ENCODE measurements at regions of chr7 and their contacts with region 1.

Region 1: GRCh38 chr7:122770686-122771335 is 68.1 kb upstream of the RNF148 start:
- DNase-seq: no peak
- ATAC-seq: peak in 1 of 8 donors; percentile 28
- H3K4me3 ChIP-seq: no peak overlapping the region
- H3K27ac ChIP-seq: no peak overlapping the region
- H3K4me1 ChIP-seq: peaks cover 0 to 7% (median 0%) of the 10 kb centered on the region in 9 donors
- H3K27me3 ChIP-seq: no peaks in the 10 kb centered on the region
- CTCF ChIP-seq: no peak

Region 2: DNA sequence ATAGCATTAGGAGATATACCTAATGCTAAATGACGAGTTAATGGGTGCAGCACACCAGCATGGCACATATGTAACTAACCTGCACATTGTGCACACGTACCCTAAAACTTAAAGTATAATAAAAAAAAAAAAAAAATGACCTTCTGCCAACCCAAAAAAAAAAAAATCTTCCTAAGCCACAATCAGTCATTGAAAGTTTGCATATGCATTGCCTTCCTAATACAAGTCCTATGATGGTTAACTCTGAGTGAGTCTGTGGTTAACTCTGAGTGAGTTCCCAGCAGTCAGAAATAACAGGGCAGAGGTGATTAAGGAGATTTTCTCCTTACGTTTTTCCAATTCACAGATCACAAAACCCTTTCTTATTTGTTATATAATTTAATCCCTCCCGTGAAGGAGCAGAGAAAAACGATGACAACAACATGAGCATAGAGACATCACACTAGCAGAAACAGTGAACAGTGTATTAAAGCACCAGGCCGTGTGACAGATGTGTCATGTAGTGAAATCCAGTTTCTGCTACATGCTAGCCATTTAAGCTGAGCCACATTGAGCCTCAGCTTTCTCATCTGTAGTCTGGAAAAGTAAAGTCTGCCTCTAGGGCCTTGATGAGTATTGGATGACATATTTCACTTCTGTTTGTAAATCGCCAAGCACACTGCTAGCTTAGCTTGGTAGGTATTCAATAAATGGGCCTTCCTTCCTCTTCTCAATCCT is 60.7 kb before region 1 on chr7:
- intact Hi-C with region 1: no loop called
- DNase-seq: no peak
- ATAC-seq: no peak
- H3K4me3 ChIP-seq: no peak overlapping the region
- H3K27ac ChIP-seq: no peak overlapping the region
- H3K4me1 ChIP-seq: no peaks in the 10 kb centered on the region
- H3K27me3 ChIP-seq: no peaks in the 10 kb centered on the region
- CTCF ChIP-seq: no peak

Region 3: GRCh38 chr7:123823898-123824753 is 1053.3 kb after region 1 on chr7:
- intact Hi-C with region 1: loop called in 1 of 10 experiments (anchors 5 kb)
- DNase-seq: no peak
- ATAC-seq: no peak
- H3K4me3 ChIP-seq: no peak overlapping the region
- H3K27ac ChIP-seq: no peak overlapping the region
- H3K4me1 ChIP-seq: no peaks in the 10 kb centered on the region
- H3K27me3 ChIP-seq: no peaks in the 10 kb centered on the region
- CTCF ChIP-seq: no peak